ENCODE measurements at regions of chr14 and their contacts with region 1.

Region 1: GRCh38 chr14:92783816-92784431 is 10.2 kb upstream of the GOLGA5 start:
- DNase-seq: peak in 1 of 2 experiments; percentile 58
- H3K4me3 ChIP-seq: no peak overlapping the region
- H3K4me3 Mint-ChIP-seq: no peak overlapping the region
- H3K27ac Mint-ChIP-seq: no peak overlapping the region
- H3K4me1 ChIP-seq: no peaks in the 10 kb centered on the region
- H3K4me1 Mint-ChIP-seq: no peaks in the 10 kb centered on the region
- H3K27me3 ChIP-seq: no peaks in the 10 kb centered on the region
- H3K27me3 Mint-ChIP-seq: no peaks in the 10 kb centered on the region
- CTCF ChIP-seq: peak; percentile 44 to 54

Region 2: GRCh38 chr14:92585981-92586937 is 197.7 kb before region 1 on chr14:
- CTCF ChIA-PET with region 1: interaction called, 3 read pairs
- POLR2A ChIA-PET with region 1: no interaction called
- intact Hi-C with region 1: loop called (anchors 5 kb)
- DNase-seq: no peak
- H3K4me3 ChIP-seq: no peak overlapping the region
- H3K4me3 Mint-ChIP-seq: no peak overlapping the region
- H3K27ac Mint-ChIP-seq: no peak overlapping the region
- H3K4me1 ChIP-seq: no peaks in the 10 kb centered on the region
- H3K4me1 Mint-ChIP-seq: no peaks in the 10 kb centered on the region
- H3K27me3 ChIP-seq: no peaks in the 10 kb centered on the region
- H3K27me3 Mint-ChIP-seq: no peaks in the 10 kb centered on the region
- CTCF ChIP-seq: no peak

Region 3: DNA sequence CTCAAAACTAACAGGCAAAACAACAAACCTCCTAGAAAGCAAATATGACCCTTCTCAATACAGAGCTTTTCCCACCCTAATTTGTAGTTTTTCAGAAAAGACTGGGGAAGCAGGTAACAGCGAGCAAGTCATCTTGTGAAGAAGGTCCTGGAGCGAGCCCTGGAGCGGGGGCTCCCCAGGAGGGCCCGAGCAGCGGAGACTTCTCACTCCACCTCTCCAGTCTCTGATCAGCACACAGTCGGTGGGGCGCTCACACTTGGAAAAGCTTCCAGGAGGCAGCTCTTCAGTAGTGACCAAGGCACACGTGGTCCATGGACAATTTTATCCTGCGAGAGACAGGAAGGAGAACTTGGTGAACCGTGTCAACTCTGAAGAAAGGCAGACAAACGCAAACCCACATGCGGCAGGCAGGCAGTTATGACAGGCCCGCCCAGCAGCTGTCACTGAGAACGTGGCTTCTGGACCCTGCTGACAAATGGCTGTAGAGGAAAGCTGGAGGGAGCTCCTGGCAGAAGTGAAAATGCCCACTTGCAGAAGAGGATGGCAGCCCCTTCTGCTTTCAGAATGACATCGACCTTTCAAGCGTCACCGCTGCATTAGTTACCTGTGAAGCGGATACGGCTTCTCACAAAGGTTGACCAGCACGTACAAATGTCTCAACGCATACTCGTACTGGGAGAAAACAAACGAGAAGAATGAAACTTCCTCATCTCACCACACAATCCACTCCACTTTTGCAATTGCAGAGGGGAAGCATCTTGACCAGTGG is 79.7 kb before region 1 on chr14:
- CTCF ChIA-PET with region 1: no interaction called
- POLR2A ChIA-PET with region 1: no interaction called
- intact Hi-C with region 1: no loop called
- DNase-seq: no peak
- H3K4me3 ChIP-seq: no peak overlapping the region
- H3K4me3 Mint-ChIP-seq: no peak overlapping the region
- H3K27ac Mint-ChIP-seq: no peak overlapping the region
- H3K4me1 ChIP-seq: no peaks in the 10 kb centered on the region
- H3K4me1 Mint-ChIP-seq: no peaks in the 10 kb centered on the region
- H3K27me3 ChIP-seq: no peaks in the 10 kb centered on the region
- H3K27me3 Mint-ChIP-seq: no peaks in the 10 kb centered on the region
- CTCF ChIP-seq: no peak

Region 4: GRCh38 chr14:92719890-92720323 is 64.0 kb before region 1 on chr14:
- CTCF ChIA-PET with region 1: no interaction called
- POLR2A ChIA-PET with region 1: no interaction called
- intact Hi-C with region 1: loop called (anchors 2 kb)
- DNase-seq: peak; percentile 34 to 38
- H3K4me3 ChIP-seq: no peak overlapping the region
- H3K4me3 Mint-ChIP-seq: no peak overlapping the region
- H3K27ac Mint-ChIP-seq: peak overlapping the region; percentile 42
- H3K4me1 ChIP-seq: peaks cover 29% of the 10 kb centered on the region
- H3K4me1 Mint-ChIP-seq: peaks cover 19% of the 10 kb centered on the region
- H3K27me3 ChIP-seq: no peaks in the 10 kb centered on the region
- H3K27me3 Mint-ChIP-seq: no peaks in the 10 kb centered on the region
- CTCF ChIP-seq: no peak

Region 5: GRCh38 chr14:92759300-92759678 is 24.6 kb before region 1 on chr14:
- CTCF ChIA-PET with region 1: no interaction called
- POLR2A ChIA-PET with region 1: no interaction called
- intact Hi-C with region 1: no loop called
- DNase-seq: peak; percentile 51 to 72
- H3K4me3 ChIP-seq: no peak overlapping the region
- H3K4me3 Mint-ChIP-seq: no peak overlapping the region
- H3K27ac Mint-ChIP-seq: no peak overlapping the region
- H3K4me1 ChIP-seq: no peaks in the 10 kb centered on the region
- H3K4me1 Mint-ChIP-seq: peaks cover 11% of the 10 kb centered on the region
- H3K27me3 ChIP-seq: no peaks in the 10 kb centered on the region
- H3K27me3 Mint-ChIP-seq: peaks cover 4% of the 10 kb centered on the region
- CTCF ChIP-seq: no peak

Region 6: GRCh38 chr14:92770484-92770883 is 13.4 kb before region 1 on chr14:
- CTCF ChIA-PET with region 1: no interaction called
- POLR2A ChIA-PET with region 1: interaction called, 14 read pairs
- intact Hi-C with region 1: no loop called
- DNase-seq: no peak
- H3K4me3 ChIP-seq: no peak overlapping the region
- H3K4me3 Mint-ChIP-seq: no peak overlapping the region
- H3K27ac Mint-ChIP-seq: no peak overlapping the region
- H3K4me1 ChIP-seq: no peaks in the 10 kb centered on the region
- H3K4me1 Mint-ChIP-seq: no peaks in the 10 kb centered on the region
- H3K27me3 ChIP-seq: no peaks in the 10 kb centered on the region
- H3K27me3 Mint-ChIP-seq: no peaks in the 10 kb centered on the region
- CTCF ChIP-seq: no peak

Measured in Caco-2 (cell line).